ENCODE measurements at regions of chr6 and their contacts with region 1.

Region 1: GRCh38 chr6:131914967-131915751 is 36.0 kb downstream of the CCN2 start:
- DNase-seq: peak; percentile 74
- ATAC-seq: peak; percentile 64
- H3K4me3 Mint-ChIP-seq: no peak overlapping the region
- H3K27ac Mint-ChIP-seq: no peak overlapping the region
- H3K4me1 Mint-ChIP-seq: peaks cover 24% of the 10 kb centered on the region
- H3K27me3 Mint-ChIP-seq: peaks cover 32% of the 10 kb centered on the region

Region 2: GRCh38 chr6:131694831-131695426 is 220.2 kb before region 1 on chr6:
- CTCF ChIA-PET with region 1: interaction called, 28 read pairs
- POLR2A ChIA-PET with region 1: no interaction called
- DNase-seq: peak; percentile 54
- ATAC-seq: peak; percentile 74
- H3K4me3 Mint-ChIP-seq: no peak overlapping the region
- H3K27ac Mint-ChIP-seq: no peak overlapping the region
- H3K4me1 Mint-ChIP-seq: no peaks in the 10 kb centered on the region
- H3K27me3 Mint-ChIP-seq: no peaks in the 10 kb centered on the region

Region 3: DNA sequence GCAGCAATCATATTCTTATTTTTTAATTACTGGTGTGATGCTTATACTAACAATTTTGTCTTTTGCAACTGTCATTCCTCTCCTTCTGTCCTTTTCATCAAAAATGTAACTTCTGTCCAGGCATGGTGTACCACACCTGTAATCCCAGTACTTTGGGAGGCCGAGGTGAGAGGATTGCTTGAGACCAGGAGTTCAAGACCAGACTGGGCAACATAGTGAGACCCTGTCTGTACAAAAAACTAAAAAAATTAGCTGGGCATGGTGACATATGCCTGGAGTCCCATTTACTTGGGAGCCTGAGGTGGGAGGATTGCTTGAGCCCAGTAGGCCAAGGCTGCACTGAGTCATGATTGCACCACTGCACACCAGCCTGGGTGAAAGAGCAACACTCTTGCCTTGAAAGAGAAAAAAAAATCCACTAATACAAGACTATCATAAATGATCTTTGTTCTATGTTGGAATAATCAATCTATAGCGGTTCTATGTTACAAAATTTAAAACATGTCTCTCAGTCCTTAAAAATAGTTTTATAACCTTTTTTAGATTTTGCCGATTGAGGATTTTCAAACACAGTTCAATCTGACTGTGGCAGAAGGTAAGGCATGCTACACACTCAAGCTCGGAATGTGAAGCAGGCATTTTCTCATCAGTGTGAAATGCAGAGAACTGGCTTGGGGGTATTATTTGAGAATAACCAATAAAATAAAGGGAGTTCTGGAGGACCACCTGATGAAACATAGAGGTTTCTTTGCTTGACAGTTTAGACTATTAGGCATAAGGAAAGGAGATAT is 37.0 kb before region 1 on chr6:
- CTCF ChIA-PET with region 1: no interaction called
- POLR2A ChIA-PET with region 1: no interaction called
- DNase-seq: no peak
- ATAC-seq: no peak
- H3K4me3 Mint-ChIP-seq: no peak overlapping the region
- H3K27ac Mint-ChIP-seq: no peak overlapping the region
- H3K4me1 Mint-ChIP-seq: no peaks in the 10 kb centered on the region
- H3K27me3 Mint-ChIP-seq: peaks cover 4% of the 10 kb centered on the region

Region 4: DNA sequence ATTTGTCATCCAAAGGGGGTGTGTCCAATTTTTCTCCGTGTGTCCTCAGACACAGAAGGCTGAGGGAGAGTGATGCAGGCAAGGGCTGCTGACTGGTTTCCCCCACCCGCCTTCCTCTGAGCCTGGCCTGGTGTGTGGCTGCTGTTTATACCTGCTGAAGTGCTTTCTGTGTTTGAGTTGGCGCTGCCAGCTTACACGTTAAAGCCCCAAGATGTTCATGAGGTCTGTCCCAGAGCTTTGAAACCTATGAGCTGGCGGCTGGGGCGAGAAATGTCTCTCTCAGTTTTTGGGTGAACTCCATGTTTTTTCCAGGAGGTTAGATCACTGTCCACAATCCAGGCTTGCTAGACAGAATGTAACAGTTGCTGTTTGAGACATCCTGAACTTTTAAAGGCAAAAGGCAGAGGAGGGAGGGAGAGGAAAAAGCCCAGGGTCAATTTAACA is 105.0 kb after region 1 on chr6:
- CTCF ChIA-PET with region 1: no interaction called
- POLR2A ChIA-PET with region 1: no interaction called
- DNase-seq: no peak
- ATAC-seq: no peak
- H3K4me3 Mint-ChIP-seq: no peak overlapping the region
- H3K27ac Mint-ChIP-seq: no peak overlapping the region
- H3K4me1 Mint-ChIP-seq: no peaks in the 10 kb centered on the region
- H3K27me3 Mint-ChIP-seq: no peaks in the 10 kb centered on the region

Region 5: DNA sequence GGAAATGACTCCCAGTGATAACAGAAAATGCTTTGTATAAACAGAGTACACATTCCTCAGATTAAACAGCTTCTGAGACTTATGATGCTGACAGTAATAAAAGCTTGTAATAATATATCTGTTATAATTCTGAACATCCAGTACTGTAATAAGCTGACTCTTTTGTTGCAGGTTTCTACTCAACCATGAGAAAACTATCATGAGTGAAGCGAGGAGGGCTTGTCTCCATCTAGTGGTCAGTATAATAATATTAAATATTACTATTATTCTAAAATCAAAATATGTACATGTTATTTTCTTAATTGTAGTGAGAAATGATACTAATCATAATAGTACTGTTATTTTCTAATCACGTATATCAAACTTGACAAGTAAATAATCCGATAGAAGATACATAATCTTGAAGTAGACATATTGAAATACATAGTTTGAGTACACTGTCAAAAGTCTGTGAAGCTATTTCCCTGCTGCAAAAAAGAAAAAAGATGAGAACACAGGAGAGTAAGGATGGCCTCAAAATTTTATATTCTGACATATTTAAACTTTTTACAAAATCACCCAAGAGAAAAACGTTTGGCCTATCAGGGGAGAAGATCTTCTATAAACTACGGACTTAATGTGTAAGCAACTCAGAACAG is 303.0 kb after region 1 on chr6:
- CTCF ChIA-PET with region 1: interaction called, 24 read pairs
- POLR2A ChIA-PET with region 1: no interaction called
- DNase-seq: no peak
- ATAC-seq: no peak
- H3K4me3 Mint-ChIP-seq: no peak overlapping the region
- H3K27ac Mint-ChIP-seq: no peak overlapping the region
- H3K4me1 Mint-ChIP-seq: no peaks in the 10 kb centered on the region
- H3K27me3 Mint-ChIP-seq: no peaks in the 10 kb centered on the region

Region 6: DNA sequence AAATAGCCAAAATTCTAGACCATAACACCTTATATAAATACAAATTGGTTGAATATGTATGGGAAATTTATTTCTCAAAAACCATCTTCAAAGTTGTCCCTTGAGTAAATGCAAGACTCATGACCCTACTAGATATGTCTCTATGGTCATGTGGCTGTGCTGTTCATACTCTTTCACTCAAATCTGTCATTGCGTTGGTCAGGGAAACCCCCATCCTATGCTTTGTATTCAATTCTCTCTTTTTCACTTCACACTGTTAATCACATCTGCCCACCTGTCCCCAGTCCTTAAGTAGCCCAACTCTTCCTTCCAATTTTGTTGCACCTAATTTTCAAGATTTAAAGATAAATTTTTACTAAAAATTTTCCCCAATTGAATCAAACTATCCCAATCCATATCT is 950.2 kb after region 1 on chr6:
- CTCF ChIA-PET with region 1: no interaction called
- POLR2A ChIA-PET with region 1: no interaction called
- DNase-seq: no peak
- ATAC-seq: no peak
- H3K4me3 Mint-ChIP-seq: no peak overlapping the region
- H3K27ac Mint-ChIP-seq: no peak overlapping the region
- H3K4me1 Mint-ChIP-seq: no peaks in the 10 kb centered on the region
- H3K27me3 Mint-ChIP-seq: peaks cover 9% of the 10 kb centered on the region

Measured in activated CD8-positive, alpha-beta T cell treated with anti-CD3 and anti-CD28 coated beads, Interleukin-2, amount 10 ng/mL, durations not matched to agents 7 days and 5 days (primary cell).